Cardiac septum (tissue), 1 donor: ENCODE measurements at regions of chr4 and their contacts with region 1.

Region 1: DNA sequence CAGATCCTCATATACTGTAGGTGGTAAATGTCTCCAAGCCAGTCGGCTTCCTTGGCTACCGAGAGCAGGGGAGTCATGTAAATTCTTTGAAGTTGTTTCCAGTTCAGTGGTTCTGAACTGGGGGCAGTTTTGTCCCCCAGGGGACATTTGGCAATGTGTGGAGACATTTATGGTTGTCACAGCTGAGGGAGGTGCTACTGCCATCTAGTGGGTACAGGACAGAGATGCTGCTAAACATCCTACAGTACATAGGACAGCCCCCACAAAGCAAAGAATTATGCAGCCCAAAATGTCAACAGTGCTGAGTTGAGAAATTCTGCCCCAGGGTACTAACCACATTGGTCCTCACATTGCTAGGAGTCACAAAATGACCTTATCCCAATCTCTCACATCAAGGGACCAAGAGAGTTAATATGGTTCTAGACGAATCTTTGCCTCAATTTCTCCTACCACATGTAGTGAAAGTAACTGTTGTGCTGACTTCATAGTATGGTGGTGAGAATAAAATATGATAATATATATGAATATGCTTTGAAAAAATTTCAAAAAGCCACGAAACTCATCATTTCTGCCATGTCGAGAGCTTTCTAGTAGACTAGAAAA is 104.4 kb upstream of the ARHGAP24 start:
- DNase-seq: no peak

Region 2: GRCh38 chr4:85084380-85085094 is 286.0 kb before region 1 on chr4:
- intact Hi-C with region 1: loop called (anchors 10 kb)
- DNase-seq: no peak

Region 3: DNA sequence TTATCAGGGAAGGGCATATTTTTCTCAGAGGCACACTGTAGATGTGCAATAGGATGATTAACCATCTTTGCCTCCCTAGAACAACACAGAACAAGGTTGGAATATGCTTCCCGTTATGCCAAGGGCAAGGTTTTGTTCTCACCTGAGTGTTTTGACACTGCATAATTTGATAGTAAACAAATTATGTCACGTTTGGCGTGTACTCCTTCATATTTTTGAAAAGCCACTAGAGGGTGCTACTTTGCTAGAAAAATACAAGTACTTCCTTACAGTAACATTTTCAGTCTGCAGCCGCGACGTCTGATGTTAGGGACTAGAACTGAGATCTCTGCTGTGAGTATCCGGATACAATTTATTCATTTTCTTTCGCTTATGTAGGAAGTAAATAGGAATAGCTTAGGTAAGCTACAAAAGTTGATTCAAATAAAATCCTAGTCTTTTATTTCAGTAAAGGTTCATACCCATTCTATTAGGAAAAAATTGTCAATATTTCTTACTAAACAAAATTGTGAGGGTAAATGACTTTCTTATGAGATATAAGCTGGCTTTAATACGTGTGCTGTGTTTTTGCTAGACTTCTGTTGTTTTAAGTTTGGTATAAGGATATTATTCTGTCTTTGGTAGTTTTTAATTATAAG is 223.0 kb before region 1 on chr4:
- intact Hi-C with region 1: loop called (anchors 2 kb)
- DNase-seq: no peak

Region 4: DNA sequence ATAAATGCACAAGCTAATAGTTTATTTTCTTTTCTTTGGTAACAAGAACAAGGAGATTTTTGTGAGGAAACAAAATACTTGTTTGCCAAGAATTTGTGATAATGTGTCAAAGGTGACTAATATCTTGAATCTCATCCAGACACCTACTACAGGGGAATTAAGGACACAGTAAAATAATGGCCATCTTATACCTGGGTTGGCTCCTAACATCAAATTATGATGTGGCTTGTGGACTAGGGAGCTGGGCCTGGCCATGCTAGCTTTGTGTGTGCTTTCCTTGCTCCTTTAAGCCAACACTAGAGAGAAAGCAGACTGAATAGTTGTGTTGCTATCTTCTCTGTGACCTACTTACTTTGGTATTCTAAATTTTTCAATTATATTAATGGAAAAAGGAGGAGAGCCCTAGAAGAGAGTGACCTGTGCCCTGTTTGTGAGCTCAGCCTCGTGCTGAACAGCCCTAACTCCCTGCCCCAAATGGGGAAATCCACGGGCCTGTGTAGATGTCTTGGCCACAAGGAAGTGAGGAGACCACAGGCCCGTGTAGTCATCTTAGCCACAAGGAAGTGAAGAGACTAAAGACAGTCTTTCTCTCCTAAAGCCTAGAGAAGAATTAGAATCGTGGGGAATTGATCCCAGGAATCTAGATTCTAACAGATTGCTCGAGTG is 127.7 kb after region 1 on chr4:
- intact Hi-C with region 1: no loop called
- DNase-seq: peak; percentile 82

Region 5: GRCh38 chr4:85747882-85748491 is 377.5 kb after region 1 on chr4:
- intact Hi-C with region 1: loop called (anchors 5 kb)
- DNase-seq: no peak